A673 (cell line): ENCODE measurements at regions of chr12 and their contacts with region 1.

Region 1: GRCh38 chr12:62123721-62124203 is 136.4 kb upstream of the USP15 start:
- DNase-seq: peak; percentile 71
- H3K4me3 ChIP-seq: no peak overlapping the region
- H3K27ac ChIP-seq: no peak overlapping the region
- H3K4me1 ChIP-seq: peaks cover 14% of the 10 kb centered on the region
- H3K27me3 ChIP-seq: no peaks in the 10 kb centered on the region
- CTCF ChIP-seq: peak; percentile 84

Region 2: GRCh38 chr12:60684988-60685655 is 1438.6 kb before region 1 on chr12:
- CTCF ChIA-PET with region 1: no interaction called
- POLR2A ChIA-PET with region 1: no interaction called
- intact Hi-C with region 1: loop called (anchors 10 kb)
- DNase-seq: peak; percentile 33
- H3K4me3 ChIP-seq: no peak overlapping the region
- H3K27ac ChIP-seq: no peak overlapping the region
- H3K4me1 ChIP-seq: no peaks in the 10 kb centered on the region
- H3K27me3 ChIP-seq: no peaks in the 10 kb centered on the region
- CTCF ChIP-seq: peak; percentile 55

Region 3: GRCh38 chr12:61706783-61707182 is 417.0 kb before region 1 on chr12:
- CTCF ChIA-PET with region 1: no interaction called
- POLR2A ChIA-PET with region 1: no interaction called
- intact Hi-C with region 1: loop called (anchors 2 kb)
- DNase-seq: no peak
- H3K4me3 ChIP-seq: no peak overlapping the region
- H3K27ac ChIP-seq: peak overlapping the region; percentile 94
- H3K4me1 ChIP-seq: peaks cover 48% of the 10 kb centered on the region
- H3K27me3 ChIP-seq: no peaks in the 10 kb centered on the region
- CTCF ChIP-seq: no peak

Region 4: GRCh38 chr12:62006076-62006732 is 117.6 kb before region 1 on chr12:
- CTCF ChIA-PET with region 1: no interaction called
- POLR2A ChIA-PET with region 1: no interaction called
- intact Hi-C with region 1: loop called (anchors 10 kb)
- DNase-seq: peak; percentile 68
- H3K4me3 ChIP-seq: no peak overlapping the region
- H3K27ac ChIP-seq: peak overlapping the region; percentile 21
- H3K4me1 ChIP-seq: peaks cover 7% of the 10 kb centered on the region
- H3K27me3 ChIP-seq: no peaks in the 10 kb centered on the region
- CTCF ChIP-seq: peak; percentile 80

Region 5: DNA sequence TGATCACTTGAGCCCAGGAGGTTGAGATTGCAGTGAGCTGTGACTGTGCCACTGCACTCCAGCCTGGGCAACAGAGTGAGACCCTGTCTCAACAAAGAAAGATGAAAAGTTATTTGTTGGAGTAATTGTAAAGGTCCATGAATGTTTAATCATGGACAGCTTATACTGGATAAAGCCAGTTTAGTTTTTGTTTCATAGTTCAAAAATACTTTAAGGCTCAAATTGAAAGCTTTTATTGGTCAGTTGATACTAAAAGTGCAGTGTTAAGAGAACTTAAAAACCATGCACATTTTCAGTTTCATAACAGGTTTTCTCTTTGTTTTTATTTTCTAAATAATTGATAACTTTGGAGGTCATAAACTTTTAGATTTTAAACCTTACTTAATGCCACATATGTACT is 451.3 kb after region 1 on chr12:
- CTCF ChIA-PET with region 1: no interaction called
- POLR2A ChIA-PET with region 1: no interaction called
- intact Hi-C with region 1: no loop called
- DNase-seq: no peak
- H3K4me3 ChIP-seq: no peak overlapping the region
- H3K27ac ChIP-seq: no peak overlapping the region
- H3K4me1 ChIP-seq: no peaks in the 10 kb centered on the region
- H3K27me3 ChIP-seq: no peaks in the 10 kb centered on the region
- CTCF ChIP-seq: no peak